Activated T-helper 2 cell treated with anti-CD3 and anti-CD28 coated beads, Interferon-gamma antibody, Interleukin-2, Interleukin-4, amounts not matched to agents 10 μg/mL and 5 μg/mL and 100 μg/mL, durations not matched to agents 14 hours and 24 hours and 36 hours (primary cell): ENCODE measurements at regions of chr1 and their contacts with region 1.

Region 1: DNA sequence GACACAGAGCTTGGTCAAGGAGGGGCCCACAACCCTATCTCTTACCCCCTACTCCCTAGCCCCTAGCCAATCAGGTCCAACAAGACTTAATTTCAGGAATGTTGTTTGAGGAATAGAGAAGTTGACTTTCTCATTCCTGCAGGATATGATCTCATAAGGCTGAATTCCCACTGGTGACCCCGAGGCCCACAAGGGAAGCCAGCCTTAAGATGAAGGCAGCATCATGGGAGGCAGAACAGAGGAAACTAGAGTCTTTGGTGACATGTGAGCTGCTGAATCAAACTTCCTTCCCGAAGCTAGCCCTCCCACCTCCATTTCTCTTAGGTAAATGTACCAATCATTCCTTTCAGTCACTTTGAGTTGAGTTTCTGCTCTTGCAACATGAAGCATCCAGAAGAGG is 9.1 kb upstream of the PDIK1L start:
- DNase-seq: no peak
- H3K4me3 Mint-ChIP-seq: no peak overlapping the region
- H3K27ac Mint-ChIP-seq: no peak overlapping the region
- H3K4me1 Mint-ChIP-seq: peaks cover 21% of the 10 kb centered on the region
- H3K27me3 Mint-ChIP-seq: peaks cover 27% of the 10 kb centered on the region

Region 2: DNA sequence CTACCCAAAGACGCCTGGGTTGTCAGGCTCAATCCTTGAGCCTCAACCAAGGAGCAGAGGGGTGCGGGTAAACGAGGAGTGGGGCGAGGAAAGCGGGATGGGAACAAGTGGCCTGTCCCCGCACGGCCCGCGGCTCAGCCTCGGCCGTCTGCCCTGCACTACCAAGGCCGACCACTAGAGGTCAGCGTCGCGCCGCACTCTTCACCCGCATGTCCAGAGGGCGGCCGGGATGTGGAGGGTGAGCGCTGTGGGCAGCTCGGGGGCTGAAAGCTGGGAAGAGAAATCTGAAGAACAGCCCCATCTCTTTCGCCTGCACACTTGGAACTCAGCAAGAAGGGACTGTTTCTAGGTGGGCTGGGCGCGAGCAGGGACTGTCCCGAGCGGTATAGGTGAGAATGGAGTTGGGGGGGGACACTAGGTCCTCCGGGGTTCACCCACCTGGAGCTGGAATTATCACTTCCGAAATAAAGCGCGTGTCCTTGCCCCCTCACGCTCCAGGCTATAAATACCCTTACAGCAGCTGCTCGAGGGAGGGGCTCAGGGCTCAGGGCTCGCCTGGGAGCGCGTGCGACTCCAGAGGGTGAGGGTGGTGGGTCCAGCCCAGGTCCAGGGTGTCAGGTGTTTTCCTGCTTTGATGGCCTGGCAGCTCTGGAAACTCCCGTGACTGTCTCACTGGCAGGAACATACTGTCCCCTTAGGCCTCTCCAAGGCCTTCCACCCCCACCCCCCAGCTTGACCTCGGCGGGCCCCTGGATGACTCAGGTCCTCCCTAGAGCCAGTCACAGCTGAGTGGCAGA is 66.4 kb before region 1 on chr1:
- intact Hi-C with region 1: loop called (anchors 2 kb)
- DNase-seq: peak; percentile 74
- H3K4me3 Mint-ChIP-seq: peak overlapping the region; percentile 94
- H3K27ac Mint-ChIP-seq: no peak overlapping the region
- H3K4me1 Mint-ChIP-seq: peaks cover 10% of the 10 kb centered on the region
- H3K27me3 Mint-ChIP-seq: peaks cover 25% of the 10 kb centered on the region

Region 3: DNA sequence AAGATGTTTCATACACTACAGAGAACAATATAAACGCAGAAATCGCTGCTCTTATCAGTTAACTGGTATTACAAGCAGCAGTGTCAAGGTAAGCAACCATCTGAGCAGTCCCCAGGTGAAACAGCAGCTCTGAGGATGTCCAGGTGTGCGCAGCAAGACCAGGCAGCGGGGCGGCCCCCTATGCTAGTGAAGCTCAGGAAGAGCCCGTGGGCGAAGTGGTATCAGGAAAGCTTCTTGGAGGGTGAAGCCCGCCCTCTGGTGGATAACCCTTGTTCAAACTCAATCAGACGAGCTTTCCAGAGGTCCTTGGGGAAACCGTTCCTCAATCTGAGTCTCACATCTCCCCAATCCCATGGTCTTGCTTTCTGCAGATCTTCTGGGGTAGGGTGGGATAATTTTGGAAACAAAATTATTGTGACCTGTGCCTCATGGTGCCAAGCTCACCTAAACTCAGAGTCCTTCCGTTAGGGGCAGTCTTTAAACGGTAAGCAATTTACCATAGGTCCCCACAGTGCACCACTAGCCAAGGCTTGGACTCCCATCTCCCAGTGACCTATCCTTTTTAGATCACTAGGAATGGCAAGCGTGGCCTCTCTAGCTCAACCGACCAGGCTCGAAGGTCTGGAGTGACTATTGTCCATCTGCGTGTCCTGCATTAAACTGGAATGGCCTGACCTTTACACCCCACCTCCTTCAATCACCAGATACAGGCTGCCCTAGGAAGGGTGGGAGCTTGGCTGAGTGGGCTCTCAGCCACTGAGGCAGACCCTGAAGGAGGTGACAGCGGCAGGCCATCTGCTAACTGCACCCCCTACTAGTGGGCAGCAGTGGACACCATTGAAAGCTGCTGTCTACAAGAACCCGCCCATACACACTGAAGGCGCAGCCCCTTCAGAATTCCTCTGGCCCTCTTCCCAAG is 42.8 kb after region 1 on chr1:
- intact Hi-C with region 1: loop called (anchors 1 kb)
- DNase-seq: peak; percentile 66
- H3K4me3 Mint-ChIP-seq: no peak overlapping the region
- H3K27ac Mint-ChIP-seq: no peak overlapping the region
- H3K4me1 Mint-ChIP-seq: peaks cover 4% of the 10 kb centered on the region
- H3K27me3 Mint-ChIP-seq: peaks cover 27% of the 10 kb centered on the region

Region 4: DNA sequence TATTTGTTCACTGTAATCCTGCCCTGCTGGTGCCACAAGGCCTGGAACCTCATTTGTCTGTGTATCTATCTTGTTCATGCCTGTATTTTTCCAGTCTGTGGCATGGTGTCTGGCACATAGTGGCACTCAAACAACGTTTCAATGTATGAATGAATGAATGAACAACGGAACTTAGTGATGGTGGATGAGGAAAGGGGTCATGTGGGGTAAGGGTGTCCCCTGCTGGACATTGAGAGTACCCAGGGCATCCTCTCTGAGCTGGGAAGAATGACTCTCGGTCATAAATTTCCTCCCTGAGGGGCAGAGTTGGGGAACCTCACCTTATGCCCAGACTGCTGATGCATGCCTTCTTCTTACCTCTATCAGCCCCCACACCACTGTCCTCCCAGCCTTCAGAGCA is 288.9 kb after region 1 on chr1:
- intact Hi-C with region 1: loop called (anchors 10 kb)
- DNase-seq: peak; percentile 31
- H3K4me3 Mint-ChIP-seq: no peak overlapping the region
- H3K27ac Mint-ChIP-seq: no peak overlapping the region
- H3K4me1 Mint-ChIP-seq: peaks cover 28% of the 10 kb centered on the region
- H3K27me3 Mint-ChIP-seq: peaks cover 9% of the 10 kb centered on the region